ENCODE measurements at regions of chr5 and their contacts with region 1.

Region 1: DNA sequence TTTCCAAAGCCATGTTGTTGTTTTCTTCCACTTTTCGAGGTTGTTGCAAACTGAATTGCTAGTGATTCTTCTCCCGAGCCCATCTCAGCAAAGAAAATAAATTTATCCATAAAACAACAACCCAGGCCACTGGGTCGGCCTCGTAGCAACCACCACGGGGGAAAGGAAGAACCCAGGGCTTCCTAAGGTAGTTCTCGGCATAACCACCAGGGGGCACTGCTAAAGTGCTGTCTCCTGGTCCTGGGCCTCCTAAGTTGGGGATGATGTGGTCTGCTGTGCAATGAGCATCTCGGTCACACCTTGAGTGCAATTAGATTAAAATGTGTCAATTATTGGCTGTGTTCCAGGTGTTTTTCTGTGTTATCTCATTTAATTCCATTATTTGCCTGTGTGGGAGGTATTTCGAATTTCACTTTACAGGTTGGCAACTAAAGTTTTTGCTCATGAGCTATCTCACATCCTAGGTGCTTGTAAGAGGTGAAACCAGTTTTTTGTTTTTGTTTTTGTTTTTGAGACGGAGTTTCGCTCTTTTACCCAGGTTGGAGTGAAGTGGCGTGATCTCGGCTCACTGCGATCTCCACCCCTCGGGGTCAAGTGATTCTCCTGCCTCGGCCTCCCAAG is 102.8 kb upstream of the DAP start:
- DNase-seq: peak in 41 of 42 donors; percentile 15 to 89 (median 67)

Region 2: DNA sequence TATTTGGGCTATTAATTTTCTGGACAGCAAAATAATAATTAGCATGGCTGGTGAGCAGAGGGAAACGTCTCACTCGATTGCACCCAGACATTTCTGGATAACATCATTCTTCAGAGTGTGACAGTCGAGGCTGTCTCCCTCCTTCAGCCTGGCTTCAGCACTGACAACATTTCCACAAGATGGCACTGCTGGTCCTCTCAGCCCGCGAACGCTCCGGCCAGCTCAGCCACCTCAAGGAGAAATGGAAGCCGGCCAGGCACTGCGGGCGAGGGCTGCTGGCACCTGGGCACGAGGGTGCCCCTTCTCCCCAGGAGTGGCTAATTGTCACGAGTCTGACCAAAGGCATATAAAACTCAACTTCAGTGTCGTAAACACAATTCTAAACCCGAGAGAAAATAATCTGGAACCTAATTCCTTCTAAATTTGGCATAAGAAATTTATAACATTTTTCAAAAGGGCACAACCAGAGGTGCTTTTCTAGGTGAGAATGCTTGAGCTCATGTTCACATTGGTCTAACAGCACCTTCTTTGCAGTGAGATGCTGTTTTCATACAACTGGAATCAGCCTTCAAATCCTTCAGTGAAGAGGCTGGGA is 168.7 kb before region 1 on chr5:
- intact Hi-C with region 1: loop called (anchors 10 kb)
- DNase-seq: peak; percentile 64 to 92 (median 80)

Region 3: DNA sequence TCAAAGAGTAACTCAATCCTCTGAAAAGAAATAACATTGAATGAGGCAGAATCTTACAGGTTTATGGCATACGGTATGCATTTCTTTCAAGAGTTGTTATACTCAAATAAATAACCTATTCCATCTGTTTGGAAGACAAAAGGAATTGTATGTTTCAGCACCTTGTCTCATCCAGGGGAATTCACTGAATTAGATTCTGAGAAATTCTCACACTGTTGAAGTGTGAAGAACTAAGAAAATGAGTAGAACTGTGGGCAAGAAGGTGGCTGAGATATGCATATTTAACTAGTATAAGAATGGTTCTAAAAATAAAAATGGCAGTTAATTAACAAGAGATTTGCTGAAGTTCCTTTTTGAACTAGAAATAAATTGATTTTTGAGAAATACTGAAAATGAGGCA is 176.5 kb after region 1 on chr5:
- intact Hi-C with region 1: loop called (anchors 5 kb)
- DNase-seq: no peak